ENCODE measurements at regions of chr12 and their contacts with region 1.

Region 1: GRCh38 chr12:53302903-53303302 is 3.4 kb downstream of the MYG1 start:
- DNase-seq: no peak
- H3K4me3 ChIP-seq: no peak overlapping the region
- H3K27ac ChIP-seq: no peak overlapping the region
- H3K4me1 ChIP-seq: peaks cover 19% of the 10 kb centered on the region
- H3K27me3 ChIP-seq: no peaks in the 10 kb centered on the region
- CTCF ChIP-seq: no peak
- POLR2A ChIP-seq: no peak

Region 2: DNA sequence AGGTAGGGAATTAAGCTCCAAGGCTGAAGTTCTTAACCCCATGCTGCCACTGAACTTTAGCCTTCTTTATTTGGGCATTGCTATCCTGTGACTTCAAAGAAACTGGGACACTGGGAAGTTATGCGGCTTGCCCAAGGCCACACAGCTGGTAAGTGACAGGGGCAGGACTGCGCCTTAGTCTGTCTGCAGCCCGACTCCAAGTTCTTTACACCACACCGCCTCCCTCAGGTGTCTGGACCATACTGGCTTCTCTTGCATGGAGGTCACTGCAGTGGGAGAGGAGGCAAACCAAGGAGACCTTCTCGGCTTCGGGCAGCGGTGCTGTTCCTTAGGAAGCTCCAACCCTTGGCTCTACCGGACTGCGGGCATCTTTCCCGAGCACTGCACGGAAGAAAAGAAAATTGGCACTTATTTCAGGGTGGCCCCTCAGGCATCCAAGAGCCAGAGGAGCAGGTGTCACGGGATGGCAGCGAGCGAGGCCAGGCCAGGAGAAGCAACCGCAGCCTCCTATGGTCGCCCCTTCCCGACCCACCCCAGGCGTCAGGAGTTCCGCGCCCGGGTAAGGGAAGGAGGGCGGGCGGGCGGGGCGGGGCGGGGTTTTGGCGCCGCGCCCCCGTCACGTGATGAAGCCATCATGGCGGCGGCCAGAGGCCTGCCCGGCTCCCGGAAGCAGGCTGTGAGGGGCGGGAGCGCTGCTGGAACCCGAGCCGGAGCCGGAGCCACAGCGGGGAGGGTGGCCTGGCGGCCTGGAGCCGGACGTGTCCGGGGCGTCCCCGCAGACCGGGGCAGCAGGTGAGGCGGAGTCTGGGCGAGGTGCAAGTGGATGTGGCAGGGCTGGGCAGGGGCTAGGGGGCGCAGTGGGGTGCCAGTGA is 51.2 kb before region 1 on chr12:
- CTCF ChIA-PET with region 1: no interaction called
- POLR2A ChIA-PET with region 1: no interaction called
- dilution Hi-C with region 1: no loop called
- intact Hi-C with region 1: no loop called
- DNase-seq: peak; percentile 74
- H3K4me3 ChIP-seq: peak overlapping the region; percentile 78 to 97 (median 84)
- H3K27ac ChIP-seq: peak overlapping the region; percentile 40
- H3K4me1 ChIP-seq: peaks cover 14% of the 10 kb centered on the region
- H3K27me3 ChIP-seq: no peaks in the 10 kb centered on the region
- CTCF ChIP-seq: peak; percentile 23 to 54
- POLR2A ChIP-seq: peak; percentile 83

Region 3: GRCh38 chr12:53277976-53278375 is 24.9 kb before region 1 on chr12:
- CTCF ChIA-PET with region 1: no interaction called
- POLR2A ChIA-PET with region 1: no interaction called
- dilution Hi-C with region 1: no loop called
- intact Hi-C with region 1: loop called (anchors 1 kb)
- DNase-seq: no peak
- H3K4me3 ChIP-seq: no peak overlapping the region
- H3K27ac ChIP-seq: no peak overlapping the region
- H3K4me1 ChIP-seq: no peaks in the 10 kb centered on the region
- H3K27me3 ChIP-seq: no peaks in the 10 kb centered on the region
- CTCF ChIP-seq: no peak
- POLR2A ChIP-seq: no peak